ENCODE measurements at regions of chr10 and their contacts with region 1.

Region 1: DNA sequence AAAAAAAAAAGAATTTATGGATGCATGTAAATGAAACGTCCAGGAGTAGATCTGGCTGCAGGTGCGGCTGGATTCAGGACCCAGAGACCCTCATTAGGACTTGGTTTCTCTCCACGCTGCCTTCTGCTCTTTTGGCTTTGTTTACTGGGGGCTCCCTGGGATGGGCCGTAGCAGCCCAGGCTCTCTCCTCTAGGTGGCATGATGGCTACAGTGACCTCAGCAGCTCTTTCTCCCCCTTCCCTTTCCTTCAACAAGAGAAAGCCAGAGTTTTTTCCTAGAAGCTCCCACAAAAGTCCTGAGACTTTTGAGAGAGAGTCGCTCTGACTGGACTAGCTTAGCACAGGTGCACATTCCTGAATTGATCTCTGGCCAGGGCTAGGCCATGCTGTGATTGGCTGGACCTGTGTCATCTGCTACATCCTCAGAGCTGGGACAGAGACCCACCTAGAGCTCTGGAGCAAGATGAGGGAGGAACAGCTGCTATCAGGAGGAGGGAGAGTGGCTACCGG is 67.8 kb upstream of the PDCD4 start:
- DNase-seq: peak in 2 of 9 donors; percentile 25 to 36
- ATAC-seq: peak; percentile 67
- H3K4me3 ChIP-seq: peak overlapping the region; percentile 29
- H3K4me3 Mint-ChIP-seq: peak overlapping the region in 9 of 10 donors; percentile 12 to 78 (median 69)
- H3K27ac ChIP-seq: peak overlapping the region; percentile 61
- H3K27ac Mint-ChIP-seq: peak overlapping the region; percentile 58 to 100 (median 93)
- H3K4me1 ChIP-seq: peaks cover 25 to 34% of the 10 kb centered on the region in 2 donors
- H3K4me1 Mint-ChIP-seq: peaks cover 30 to 53% (median 47%) of the 10 kb centered on the region in 7 donors
- H3K27me3 ChIP-seq: no peaks in the 10 kb centered on the region
- H3K27me3 Mint-ChIP-seq: no peaks in the 10 kb centered on the region

Region 2: DNA sequence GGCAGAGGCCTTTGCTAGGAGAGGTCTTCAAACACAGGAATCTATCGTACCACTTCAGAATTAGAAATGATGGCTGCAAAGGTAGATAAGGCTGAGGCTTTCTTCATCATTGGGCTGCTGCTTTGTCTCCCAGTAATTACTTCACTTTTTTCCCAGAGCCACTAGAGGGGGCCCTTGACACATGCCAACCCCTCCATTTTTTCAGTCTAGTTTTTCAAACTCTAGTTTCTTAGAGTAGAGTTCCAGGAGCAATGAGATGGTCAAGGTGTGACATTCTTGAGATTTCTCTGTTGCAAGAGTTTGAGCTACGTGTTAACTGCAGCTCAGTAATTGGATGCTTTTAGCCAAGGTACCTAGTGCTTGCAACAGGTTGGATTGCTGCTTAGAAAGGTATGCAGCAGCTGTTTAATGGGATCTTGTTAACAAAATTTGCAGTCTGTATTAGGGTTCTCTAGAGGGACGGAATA is 193.5 kb before region 1 on chr10:
- CTCF ChIA-PET with region 1: no interaction called
- POLR2A ChIA-PET with region 1: no interaction called
- intact Hi-C with region 1: loop called in 1 of 2 experiments (anchors 1 kb)
- DNase-seq: peak; percentile 16 to 75 (median 70)
- ATAC-seq: peak; percentile 84
- H3K4me3 ChIP-seq: no peak overlapping the region
- H3K4me3 Mint-ChIP-seq: no peak overlapping the region
- H3K27ac ChIP-seq: no peak overlapping the region
- H3K27ac Mint-ChIP-seq: no peak overlapping the region
- H3K4me1 ChIP-seq: no peaks in the 10 kb centered on the region
- H3K4me1 Mint-ChIP-seq: peaks cover 0 to 18% (median 7%) of the 10 kb centered on the region in 7 donors
- H3K27me3 ChIP-seq: no peaks in the 10 kb centered on the region
- H3K27me3 Mint-ChIP-seq: no peaks in the 10 kb centered on the region

Region 3: DNA sequence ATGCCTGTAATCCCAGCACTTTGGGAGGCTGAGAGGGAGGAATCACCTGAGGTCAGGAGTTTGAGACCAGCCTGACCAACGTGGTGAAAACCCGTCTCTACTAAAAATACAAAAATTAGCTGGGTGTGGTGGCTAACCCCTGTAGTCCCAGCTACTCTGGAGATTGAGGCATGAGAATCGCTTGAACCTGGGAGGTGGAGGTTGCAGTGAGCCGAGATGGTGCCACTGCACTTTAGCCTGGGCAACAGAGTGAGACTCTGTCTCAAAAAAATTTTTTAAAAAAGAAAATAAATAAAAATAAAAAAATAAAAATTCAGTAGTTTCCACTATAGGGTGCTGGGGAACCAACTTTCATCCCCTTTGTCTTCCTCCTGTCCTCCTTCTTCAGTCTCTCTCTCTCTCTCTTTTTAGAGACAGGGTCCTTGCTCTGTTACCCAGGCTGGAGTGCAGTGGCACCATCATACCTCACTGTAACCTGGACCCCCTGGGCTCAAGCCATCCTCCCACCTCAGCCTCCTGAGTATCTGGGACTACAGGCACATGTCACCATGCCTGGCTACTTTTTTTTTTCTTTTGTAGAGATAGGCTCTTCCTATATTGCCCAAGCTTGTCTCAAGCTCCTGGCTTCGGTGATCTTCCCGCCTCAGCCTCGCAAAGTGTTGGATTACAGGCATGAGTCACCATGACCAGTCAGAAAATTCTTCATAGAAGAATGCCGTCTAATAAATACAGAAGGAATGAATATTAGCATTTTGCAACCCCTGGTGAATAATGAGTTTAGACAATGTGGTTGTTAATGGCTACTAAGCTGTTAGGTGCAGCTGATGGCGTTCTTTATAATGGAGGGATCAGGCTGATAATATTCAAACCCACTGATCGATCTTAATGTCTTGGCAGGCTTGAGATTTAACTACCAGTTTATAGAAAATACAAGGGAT is 139.1 kb before region 1 on chr10:
- CTCF ChIA-PET with region 1: no interaction called
- POLR2A ChIA-PET with region 1: no interaction called
- intact Hi-C with region 1: no loop called
- DNase-seq: no peak
- ATAC-seq: no peak
- H3K4me3 ChIP-seq: no peak overlapping the region
- H3K4me3 Mint-ChIP-seq: no peak overlapping the region
- H3K27ac ChIP-seq: no peak overlapping the region
- H3K27ac Mint-ChIP-seq: peak overlapping the region in 1 of 9 donors; percentile 11
- H3K4me1 ChIP-seq: no peaks in the 10 kb centered on the region
- H3K4me1 Mint-ChIP-seq: peaks cover 3 to 12% (median 5%) of the 10 kb centered on the region in 7 donors
- H3K27me3 ChIP-seq: no peaks in the 10 kb centered on the region
- H3K27me3 Mint-ChIP-seq: peaks cover 0 to 57% (median 3%) of the 10 kb centered on the region in 5 donors

Region 4: GRCh38 chr10:110820321-110820814 is 16.5 kb after region 1 on chr10:
- CTCF ChIA-PET with region 1: interaction called, 4 read pairs
- POLR2A ChIA-PET with region 1: interaction called, 13 read pairs
- intact Hi-C with region 1: loop called (anchors 1 to 2 kb)
- DNase-seq: no peak
- ATAC-seq: no peak
- H3K4me3 ChIP-seq: no peak overlapping the region
- H3K4me3 Mint-ChIP-seq: no peak overlapping the region
- H3K27ac ChIP-seq: no peak overlapping the region
- H3K27ac Mint-ChIP-seq: peak overlapping the region in 5 of 9 donors; percentile 19 to 59 (median 33)
- H3K4me1 ChIP-seq: peaks cover 0 to 18% of the 10 kb centered on the region in 2 donors
- H3K4me1 Mint-ChIP-seq: peaks cover 17 to 45% (median 27%) of the 10 kb centered on the region in 7 donors
- H3K27me3 ChIP-seq: no peaks in the 10 kb centered on the region
- H3K27me3 Mint-ChIP-seq: peaks cover 0 to 7% (median 0%) of the 10 kb centered on the region in 5 donors

Region 5: DNA sequence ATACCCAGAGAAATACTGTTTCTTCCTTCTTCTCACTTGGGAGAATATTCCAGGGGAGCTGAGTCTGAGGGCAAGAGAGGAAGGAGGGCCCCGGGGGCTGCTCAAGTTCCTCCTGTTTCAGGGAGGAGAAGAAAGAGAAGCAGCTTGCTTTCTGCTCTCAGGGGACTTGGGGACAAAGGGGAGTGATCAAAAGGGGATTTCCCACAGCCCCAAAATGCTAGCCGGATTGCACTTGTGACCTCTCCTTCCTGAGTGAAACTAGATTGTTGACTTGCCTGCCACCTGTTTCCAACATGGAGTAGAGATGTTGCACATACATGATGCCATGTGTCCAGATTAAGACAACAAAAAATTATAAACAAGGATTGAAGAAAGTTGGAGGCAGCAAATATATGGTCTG is 39.1 kb after region 1 on chr10:
- CTCF ChIA-PET with region 1: no interaction called
- POLR2A ChIA-PET with region 1: interaction called, 4 read pairs
- intact Hi-C with region 1: loop called in 1 of 2 experiments (anchors 2 kb)
- DNase-seq: peak in 7 of 9 donors; percentile 35 to 60 (median 46)
- ATAC-seq: peak; percentile 88
- H3K4me3 ChIP-seq: no peak overlapping the region
- H3K4me3 Mint-ChIP-seq: peak overlapping the region in 8 of 10 donors; percentile 1 to 67 (median 42)
- H3K27ac ChIP-seq: peak overlapping the region; percentile 40
- H3K27ac Mint-ChIP-seq: peak overlapping the region; percentile 79 to 98 (median 89)
- H3K4me1 ChIP-seq: peaks cover 22 to 27% of the 10 kb centered on the region in 2 donors
- H3K4me1 Mint-ChIP-seq: peaks cover 36 to 67% (median 54%) of the 10 kb centered on the region in 7 donors
- H3K27me3 ChIP-seq: no peaks in the 10 kb centered on the region
- H3K27me3 Mint-ChIP-seq: no peaks in the 10 kb centered on the region

Region 6: GRCh38 chr10:110883924-110884323 is 80.0 kb after region 1 on chr10:
- CTCF ChIA-PET with region 1: interaction called, 10 read pairs
- POLR2A ChIA-PET with region 1: interaction called, 6 read pairs
- intact Hi-C with region 1: no loop called
- DNase-seq: no peak
- ATAC-seq: no peak
- H3K4me3 ChIP-seq: peak overlapping the region; percentile 42
- H3K4me3 Mint-ChIP-seq: peak overlapping the region; percentile 69 to 85 (median 74)
- H3K27ac ChIP-seq: peak overlapping the region; percentile 62
- H3K27ac Mint-ChIP-seq: peak overlapping the region in 8 of 9 donors; percentile 24 to 85 (median 76)
- H3K4me1 ChIP-seq: peaks cover 40 to 60% of the 10 kb centered on the region in 2 donors
- H3K4me1 Mint-ChIP-seq: peaks cover 37 to 81% (median 74%) of the 10 kb centered on the region in 7 donors
- H3K27me3 ChIP-seq: no peaks in the 10 kb centered on the region
- H3K27me3 Mint-ChIP-seq: no peaks in the 10 kb centered on the region

Measured in naive thymus-derived CD4-positive, alpha-beta T cell (primary cell).